ENCODE measurements at regions of chr6 and their contacts with region 1.

Region 1: GRCh38 chr6:33391278-33391921 is at the start of gene KIFC1:
- DNase-seq: peak; percentile 92 to 99
- ATAC-seq: peak; percentile 98
- H3K4me3 ChIP-seq: peak within 1 kb of the TSS; percentile 81
- H3K27ac ChIP-seq: peak within 1 kb of the TSS; percentile 82 to 94
- H3K4me1 ChIP-seq: peaks cover 31% of the 10 kb centered on the region
- CTCF ChIP-seq: peak; percentile 75
- EP300 ChIP-seq: no peak
- POLR2A ChIP-seq: no peak; the same call in 1 of the 2 replicates
- RAD21 ChIP-seq: peak; percentile 36 to 52
- polyA plus RNA-seq, gene KIFC1: 23.0 and 23.9 TPM in 2 replicates

Region 2: GRCh38 chr6:33407132-33407718 is 15.8 kb after region 1 on chr6:
- CTCF ChIA-PET with region 1: interaction called, 10 read pairs
- POLR2A ChIA-PET with region 1: interaction called, 5 read pairs
- DNase-seq: peak in 1 of 2 experiments; percentile 47
- ATAC-seq: no peak
- H3K4me3 ChIP-seq: no peak overlapping the region
- H3K27ac ChIP-seq: no peak overlapping the region
- H3K4me1 ChIP-seq: peaks cover 12% of the 10 kb centered on the region
- CTCF ChIP-seq: no peak; the same call in 1 of the 3 replicates
- EP300 ChIP-seq: no peak
- POLR2A ChIP-seq: no peak
- RAD21 ChIP-seq: peak; percentile 25 to 40; a peak in 2 of 5 replicates

Region 3: GRCh38 chr6:33570806-33571636 is 179.6 kb after region 1 on chr6:
- CTCF ChIA-PET with region 1: no interaction called
- POLR2A ChIA-PET with region 1: no interaction called
- DNase-seq: peak; percentile 61 to 74
- ATAC-seq: peak; percentile 93 to 98
- H3K4me3 ChIP-seq: peak overlapping the region; percentile 74
- H3K27ac ChIP-seq: peak overlapping the region; percentile 80 to 84
- H3K4me1 ChIP-seq: peaks cover 5% of the 10 kb centered on the region; the same call in 2 of the 3 replicates
- CTCF ChIP-seq: no peak
- EP300 ChIP-seq: no peak
- POLR2A ChIP-seq: peak; percentile 66
- RAD21 ChIP-seq: no peak

Region 4: GRCh38 chr6:33642897-33643296 is 251.5 kb after region 1 on chr6:
- CTCF ChIA-PET with region 1: no interaction called
- POLR2A ChIA-PET with region 1: no interaction called
- DNase-seq: no peak
- ATAC-seq: no peak
- H3K4me3 ChIP-seq: no peak overlapping the region
- H3K27ac ChIP-seq: no peak overlapping the region
- H3K4me1 ChIP-seq: peaks cover 10% of the 10 kb centered on the region; the same call in 2 of the 3 replicates
- CTCF ChIP-seq: no peak
- EP300 ChIP-seq: no peak
- POLR2A ChIP-seq: no peak
- RAD21 ChIP-seq: no peak

Measured in A549 (cell line).